ENCODE measurements at regions of chr16 and their contacts with region 1.

Region 1: DNA sequence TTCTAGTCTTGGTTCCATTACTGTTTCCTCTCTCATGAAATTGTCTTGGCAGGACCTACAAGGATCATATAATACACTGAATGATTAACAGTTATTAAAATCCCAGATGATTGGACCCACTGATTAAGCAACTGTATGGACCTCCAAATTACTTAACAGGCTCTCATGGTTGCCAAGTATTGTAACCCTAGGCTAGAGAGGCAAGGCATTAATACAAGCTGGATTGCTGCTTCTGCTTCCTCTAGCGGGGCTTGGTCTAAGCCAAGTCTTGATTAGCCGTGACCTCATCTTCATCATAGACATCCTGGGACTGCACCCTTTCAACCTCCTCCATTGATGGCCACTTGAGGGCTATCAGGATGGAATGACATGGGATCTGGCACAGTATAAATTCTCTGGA is 46.9 kb downstream of the SYCE1L start:
- ATAC-seq: no peak
- H3K4me3 ChIP-seq: no peak overlapping the region
- H3K27ac ChIP-seq: no peak overlapping the region
- H3K4me1 ChIP-seq: no peaks in the 10 kb centered on the region

Region 2: GRCh38 chr16:77584205-77584859 is 338.2 kb after region 1 on chr16:
- in situ Hi-C with region 1: loop called in 2 of 9 experiments (anchors 10 to 25 kb)
- ATAC-seq: peak in 7 of 8 experiments; percentile 30 to 79 (median 48)
- H3K4me3 ChIP-seq: no peak overlapping the region
- H3K27ac ChIP-seq: no peak overlapping the region
- H3K4me1 ChIP-seq: peaks cover 0 to 3% of the 10 kb centered on the region in 2 donors

Region 3: GRCh38 chr16:77675464-77676324 is 429.5 kb after region 1 on chr16:
- in situ Hi-C with region 1: no loop called
- ATAC-seq: peak; percentile 80 to 91 (median 86)
- H3K4me3 ChIP-seq: no peak overlapping the region
- H3K27ac ChIP-seq: no peak overlapping the region
- H3K4me1 ChIP-seq: peaks cover 2 to 6% of the 10 kb centered on the region in 2 donors

Measured in motor neuron (in vitro differentiated cells).